ENCODE measurements at regions of chr10 and their contacts with region 1.

Region 1: DNA sequence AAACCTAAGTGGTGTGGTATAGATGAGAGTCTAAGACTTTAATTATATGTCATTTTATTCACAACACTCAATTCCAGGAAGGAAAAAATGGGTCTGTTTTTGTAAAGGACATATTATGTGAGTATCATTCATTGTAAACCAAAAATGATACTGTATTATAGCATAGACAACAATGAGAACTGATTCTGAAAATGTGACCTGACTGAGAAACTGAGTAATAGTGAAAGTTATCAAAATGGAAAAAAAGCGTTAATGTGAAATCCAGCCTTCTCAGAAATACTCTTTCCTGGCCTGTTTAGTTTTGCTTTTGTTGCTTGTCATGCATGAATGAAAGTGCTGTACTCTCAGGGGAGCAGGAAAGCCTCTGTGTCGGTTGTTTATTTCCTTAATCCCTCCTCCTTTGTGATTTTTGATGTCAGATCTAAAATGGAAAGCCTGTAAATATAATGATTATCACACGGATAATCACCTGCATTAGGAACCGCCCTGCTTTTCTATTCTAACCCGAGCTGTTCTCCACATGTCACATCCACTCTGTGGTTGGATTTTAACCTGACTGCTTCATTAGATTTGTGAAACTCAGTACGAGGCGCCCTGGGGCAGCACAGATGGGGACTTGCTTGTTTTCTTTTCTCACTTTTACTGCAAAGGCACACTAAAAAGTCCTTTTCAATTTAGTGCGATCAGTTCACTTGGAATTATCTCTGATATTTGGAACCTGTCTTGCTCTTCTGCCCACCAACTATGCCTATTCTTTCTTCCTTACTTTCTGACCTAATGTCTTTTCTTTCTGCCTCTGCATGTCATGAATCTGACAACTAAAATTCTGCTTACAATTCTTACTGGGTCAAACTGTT is 240.9 kb upstream of the KAT6B start:
- DNase-seq: peak in 4 of 5 donors; percentile 2 to 63 (median 52)
- H3K4me3 ChIP-seq: peak overlapping the region; percentile 33
- H3K4me3 Mint-ChIP-seq: peak overlapping the region; percentile 65 to 85 (median 80)
- H3K27ac ChIP-seq: peak overlapping the region; percentile 58
- H3K27ac Mint-ChIP-seq: peak overlapping the region; percentile 52 to 98 (median 94)
- H3K4me1 ChIP-seq: peaks cover 55% of the 10 kb centered on the region
- H3K4me1 Mint-ChIP-seq: peaks cover 53 to 77% (median 74%) of the 10 kb centered on the region in 3 donors
- H3K27me3 ChIP-seq: no peaks in the 10 kb centered on the region
- H3K27me3 Mint-ChIP-seq: no peaks in the 10 kb centered on the region

Region 2: GRCh38 chr10:74683621-74684364 is 98.3 kb after region 1 on chr10:
- CTCF ChIA-PET with region 1: no interaction called
- POLR2A ChIA-PET with region 1: no interaction called
- DNase-seq: no peak
- H3K4me3 ChIP-seq: no peak overlapping the region
- H3K4me3 Mint-ChIP-seq: no peak overlapping the region
- H3K27ac ChIP-seq: no peak overlapping the region
- H3K27ac Mint-ChIP-seq: peak overlapping the region in 1 of 8 donors; percentile 17
- H3K4me1 ChIP-seq: peaks cover 4% of the 10 kb centered on the region
- H3K4me1 Mint-ChIP-seq: peaks cover 11 to 23% (median 16%) of the 10 kb centered on the region in 3 donors
- H3K27me3 ChIP-seq: no peaks in the 10 kb centered on the region
- H3K27me3 Mint-ChIP-seq: no peaks in the 10 kb centered on the region

Region 3: DNA sequence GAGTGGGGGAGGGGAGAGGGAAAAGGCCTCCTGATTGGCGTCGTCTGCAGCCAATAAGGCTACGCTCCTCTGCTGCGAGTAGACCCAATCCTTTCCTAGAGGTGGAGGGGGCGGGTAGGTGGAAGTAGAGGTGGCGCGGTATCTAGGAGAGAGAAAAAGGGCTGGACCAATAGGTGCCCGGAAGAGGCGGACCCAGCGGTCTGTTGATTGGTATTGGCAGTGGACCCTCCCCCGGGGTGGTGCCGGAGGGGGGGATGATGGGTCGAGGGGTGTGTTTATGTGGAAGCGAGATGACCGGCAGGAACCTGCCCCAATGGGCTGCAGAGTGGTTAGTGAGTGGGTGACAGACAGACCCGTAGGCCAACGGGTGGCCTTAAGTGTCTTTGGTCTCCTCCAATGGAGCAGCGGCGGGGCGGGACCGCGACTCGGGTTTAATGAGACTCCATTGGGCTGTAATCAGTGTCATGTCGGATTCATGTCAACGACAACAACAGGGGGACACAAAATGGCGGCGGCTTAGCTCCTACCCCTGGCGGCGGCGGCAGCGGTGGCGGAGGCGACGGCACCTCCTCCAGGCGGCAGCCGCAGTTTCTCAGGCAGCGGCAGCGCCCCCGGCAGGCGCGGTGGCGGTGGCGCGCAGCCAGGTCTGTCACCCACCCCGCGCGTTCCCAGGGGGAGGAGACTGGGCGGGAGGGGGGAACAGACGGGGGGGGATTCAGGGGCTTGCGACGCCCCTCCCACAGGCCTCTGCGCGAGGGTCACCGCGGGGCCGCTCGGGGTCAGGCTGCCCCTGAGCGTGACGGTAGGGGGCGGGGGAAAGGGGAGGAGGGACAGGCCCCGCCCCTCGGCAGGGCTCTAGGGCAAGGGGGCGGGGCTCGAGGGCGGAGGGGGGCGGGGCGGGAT is 240.9 kb after region 1 on chr10 and contains the start of gene KAT6B:
- CTCF ChIA-PET with region 1: no interaction called
- POLR2A ChIA-PET with region 1: interaction called, 10 read pairs
- DNase-seq: peak; percentile 100
- H3K4me3 ChIP-seq: peak within 1 kb of the TSS; percentile 80
- H3K4me3 Mint-ChIP-seq: peak within 1 kb of the TSS; percentile 87 to 97 (median 94)
- H3K27ac ChIP-seq: peak within 1 kb of the TSS; percentile 88
- H3K27ac Mint-ChIP-seq: peak within 1 kb of the TSS; percentile 91 to 100 (median 98)
- H3K4me1 ChIP-seq: peaks cover 39% of the 10 kb centered on the region
- H3K4me1 Mint-ChIP-seq: peaks cover 63 to 72% (median 67%) of the 10 kb centered on the region in 3 donors
- H3K27me3 ChIP-seq: no peaks in the 10 kb centered on the region
- H3K27me3 Mint-ChIP-seq: no peaks in the 10 kb centered on the region
- total RNA-seq, gene KAT6B: 21.8 to 23.6 TPM

Region 4: DNA sequence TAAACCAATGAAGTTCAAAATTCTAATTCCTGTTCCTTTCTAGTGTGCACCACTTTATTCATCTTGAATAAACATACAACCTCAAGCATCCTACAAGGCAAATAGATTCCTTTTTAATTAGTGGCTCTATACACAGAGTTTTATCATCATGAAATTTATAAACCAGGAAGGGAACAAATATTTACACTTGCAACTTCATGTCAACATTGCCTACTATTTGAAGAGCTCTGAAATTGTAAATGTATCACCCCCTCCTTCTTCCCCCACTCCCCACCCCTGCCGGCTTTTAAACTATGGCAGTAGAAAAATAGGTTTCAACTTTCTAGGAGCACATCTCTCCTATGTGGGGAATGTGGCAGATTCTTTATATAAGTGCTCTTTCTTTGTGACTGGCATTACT is 290.5 kb after region 1 on chr10:
- CTCF ChIA-PET with region 1: no interaction called
- POLR2A ChIA-PET with region 1: no interaction called
- DNase-seq: no peak
- H3K4me3 ChIP-seq: no peak overlapping the region
- H3K4me3 Mint-ChIP-seq: no peak overlapping the region
- H3K27ac ChIP-seq: no peak overlapping the region
- H3K27ac Mint-ChIP-seq: peak overlapping the region in 3 of 8 donors; percentile 5 to 47 (median 13)
- H3K4me1 ChIP-seq: no peaks in the 10 kb centered on the region
- H3K4me1 Mint-ChIP-seq: peaks cover 43 to 84% (median 58%) of the 10 kb centered on the region in 3 donors
- H3K27me3 ChIP-seq: no peaks in the 10 kb centered on the region
- H3K27me3 Mint-ChIP-seq: no peaks in the 10 kb centered on the region

Measured in CD8-positive, alpha-beta memory T cell (primary cell).